GM23248 (cell line): ENCODE measurements at regions of chr3 and their contacts with region 1.

Region 1: DNA sequence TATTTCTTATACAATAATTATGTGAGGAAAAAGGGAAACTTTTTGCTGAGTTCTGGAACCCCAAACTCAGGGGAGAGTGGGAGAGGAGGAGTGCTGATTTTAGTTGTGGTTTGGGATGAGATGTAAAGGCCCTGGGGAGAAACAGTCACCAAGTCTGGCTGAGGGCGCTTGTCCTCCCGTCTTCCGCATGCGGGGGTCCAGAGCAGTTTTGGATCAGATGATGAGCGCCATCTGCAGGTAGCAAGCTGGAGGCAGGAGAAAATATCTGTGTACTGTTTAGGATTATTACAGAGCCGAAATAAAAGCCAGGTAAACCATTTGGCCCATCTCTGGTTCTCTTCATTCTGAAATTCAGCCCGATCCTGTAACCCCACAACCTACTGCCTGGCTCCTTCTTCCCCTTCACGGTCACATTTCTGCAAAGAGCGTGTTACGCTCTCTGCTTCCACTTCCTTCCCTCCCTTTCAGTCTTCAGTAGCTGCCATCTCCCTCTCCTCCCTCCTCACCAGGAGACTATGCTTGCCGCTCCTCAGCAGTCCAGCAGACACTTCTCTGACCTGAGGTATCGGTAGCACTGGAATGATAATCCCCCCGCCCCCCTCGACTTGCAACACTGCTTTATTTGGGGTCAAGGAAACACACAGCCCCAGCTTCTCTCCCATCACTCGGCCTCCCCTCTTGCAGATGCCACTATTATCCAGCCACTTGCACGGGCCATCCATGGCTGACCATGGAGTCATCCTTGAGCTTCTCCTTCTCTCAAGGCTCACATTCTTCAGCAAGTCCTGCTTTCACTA is 1.4 kb upstream of the PARP14 start:
- DNase-seq: peak; percentile 90
- H3K4me3 ChIP-seq: peak overlapping the region; percentile 78
- H3K27ac ChIP-seq: peak overlapping the region; percentile 44
- H3K4me1 ChIP-seq: peaks cover 11% of the 10 kb centered on the region; the same call in 1 of the 2 replicates
- H3K27me3 ChIP-seq: no peaks in the 10 kb centered on the region

Region 2: GRCh38 chr3:122458992-122459391 is 220.3 kb before region 1 on chr3:
- in situ Hi-C with region 1: loop called (anchors 25 kb)
- DNase-seq: peak; percentile 75
- H3K4me3 ChIP-seq: no peak overlapping the region
- H3K27ac ChIP-seq: no peak overlapping the region
- H3K4me1 ChIP-seq: no peaks in the 10 kb centered on the region
- H3K27me3 ChIP-seq: no peaks in the 10 kb centered on the region

Region 3: DNA sequence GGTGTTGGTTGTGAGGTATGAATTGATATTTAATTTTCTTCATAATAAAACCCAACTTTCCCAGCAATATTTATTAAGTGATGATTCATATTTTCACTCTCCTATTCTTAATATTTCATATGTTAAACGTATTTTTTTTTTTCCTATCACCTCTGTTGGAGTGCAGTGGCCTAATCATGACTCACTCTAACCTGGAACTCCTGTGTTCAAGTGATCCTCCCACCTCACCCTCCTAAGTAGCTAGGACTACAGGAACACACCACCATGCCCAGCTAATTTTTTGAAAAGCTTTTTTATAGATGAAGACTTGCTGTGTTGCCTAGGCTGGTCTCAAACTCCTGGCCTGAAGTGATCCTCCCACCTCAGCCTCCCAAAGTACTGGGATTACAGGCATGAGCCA is 93.2 kb before region 1 on chr3:
- in situ Hi-C with region 1: no loop called
- DNase-seq: no peak
- H3K4me3 ChIP-seq: no peak overlapping the region
- H3K27ac ChIP-seq: no peak overlapping the region
- H3K4me1 ChIP-seq: no peaks in the 10 kb centered on the region
- H3K27me3 ChIP-seq: no peaks in the 10 kb centered on the region